ENCODE measurements at regions of chr16 and their contacts with region 1.

Region 1: DNA sequence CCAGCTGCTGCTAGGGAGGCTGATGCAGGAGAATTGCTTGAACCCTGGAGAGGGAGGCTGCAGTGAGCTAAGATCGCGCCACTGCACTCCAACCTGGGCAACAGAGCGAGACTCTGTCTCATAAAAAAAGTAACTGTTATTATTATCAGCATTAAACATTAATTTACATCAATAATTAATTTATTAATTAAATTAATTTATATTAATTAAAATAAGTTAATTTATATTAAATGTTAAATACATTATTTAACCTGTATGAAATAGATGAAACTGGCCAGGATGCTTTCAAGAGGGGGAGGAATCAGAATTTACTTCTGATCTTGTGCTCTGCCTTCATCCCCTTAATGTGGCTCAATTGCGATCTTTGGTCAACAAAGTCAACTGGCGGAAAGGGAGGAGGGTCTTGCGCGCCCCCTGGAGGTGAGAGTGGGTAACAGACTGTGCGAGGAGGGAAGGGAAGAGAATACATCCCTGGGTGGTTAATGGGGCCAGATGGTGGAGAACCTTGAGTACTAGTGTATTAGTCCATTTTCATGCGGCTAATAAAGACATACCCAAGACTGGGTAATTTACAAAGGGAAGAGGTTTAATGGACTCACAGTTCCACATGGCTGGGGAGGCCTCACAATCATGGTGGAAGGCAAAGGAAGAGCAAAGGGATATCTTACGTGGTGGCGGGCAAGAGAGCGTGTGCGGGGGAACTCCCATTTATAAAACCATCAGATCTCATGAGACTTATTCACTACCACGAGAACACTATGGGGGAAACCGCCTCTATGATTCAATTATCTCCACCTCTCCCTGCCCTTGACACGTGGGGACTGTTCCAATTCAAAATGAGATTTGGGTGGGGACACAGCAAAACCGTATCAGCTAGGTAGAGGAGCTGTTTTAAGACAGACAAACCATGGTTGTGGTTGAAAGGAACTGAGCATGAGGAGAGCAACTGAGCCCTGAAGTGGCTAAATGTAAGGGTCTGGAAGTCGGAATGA is 15.7 kb upstream of the CPPED1 start:
- DNase-seq: peak; percentile 74 to 77
- H3K4me3 ChIP-seq: no peak overlapping the region
- H3K27ac ChIP-seq: no peak overlapping the region
- H3K4me1 ChIP-seq: no peaks in the 10 kb centered on the region
- H3K27me3 ChIP-seq: no peaks in the 10 kb centered on the region
- CTCF ChIP-seq: peak in 6 of 7 experiments; percentile 47 to 92 (median 82)
- EP300 ChIP-seq: no peak
- POLR2A ChIP-seq: no peak

Region 2: GRCh38 chr16:12455287-12455798 is 364.1 kb before region 1 on chr16:
- intact Hi-C with region 1: loop called (anchors 10 kb)
- DNase-seq: peak; percentile 61 to 78
- H3K4me3 ChIP-seq: no peak overlapping the region
- H3K27ac ChIP-seq: no peak overlapping the region
- H3K4me1 ChIP-seq: peaks cover 0 to 6% (median 3%) of the 10 kb centered on the region in 4 donors
- H3K27me3 ChIP-seq: no peaks in the 10 kb centered on the region
- CTCF ChIP-seq: peak in 5 of 7 experiments; percentile 46 to 79 (median 68)
- EP300 ChIP-seq: no peak
- POLR2A ChIP-seq: no peak

Region 3: DNA sequence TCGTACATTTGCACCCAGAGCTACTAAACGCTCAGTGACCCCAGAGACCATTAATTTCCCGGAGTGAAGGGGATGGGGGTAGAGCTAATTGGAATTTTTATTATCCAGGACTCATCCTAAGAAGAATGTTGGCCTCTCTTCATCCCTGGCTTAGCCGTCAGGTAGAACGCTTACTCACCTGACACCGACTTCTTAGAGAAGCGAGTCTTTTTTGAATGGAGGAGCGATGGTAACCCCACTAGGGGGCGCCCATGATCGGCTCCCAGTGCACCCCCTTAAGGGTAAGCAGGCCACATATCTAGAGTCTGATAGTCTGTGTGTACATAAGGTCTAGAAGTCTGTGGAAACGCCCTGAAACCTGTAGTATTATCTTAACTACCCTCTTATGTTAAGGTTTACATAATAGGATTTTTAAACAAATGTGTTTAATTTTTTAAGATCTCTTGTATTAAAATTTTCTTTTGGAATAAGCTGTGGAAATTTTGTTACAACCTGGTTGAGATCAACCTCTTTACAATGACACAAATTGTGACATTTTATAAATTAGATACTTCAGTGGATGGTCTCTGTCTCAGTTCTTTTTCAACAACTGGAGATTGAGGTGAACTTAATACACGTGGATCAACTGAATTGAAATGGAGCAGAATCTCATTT is 245.6 kb before region 1 on chr16:
- intact Hi-C with region 1: loop called (anchors 10 kb)
- DNase-seq: peak; percentile 78 to 79
- H3K4me3 ChIP-seq: no peak overlapping the region
- H3K27ac ChIP-seq: no peak overlapping the region
- H3K4me1 ChIP-seq: peaks cover 0 to 8% (median 0%) of the 10 kb centered on the region in 4 donors
- H3K27me3 ChIP-seq: no peaks in the 10 kb centered on the region
- CTCF ChIP-seq: peak in 5 of 7 experiments; percentile 27 to 63 (median 46)
- EP300 ChIP-seq: no peak
- POLR2A ChIP-seq: no peak